ENCODE measurements at regions of chr7 and their contacts with region 1.

Region 1: DNA sequence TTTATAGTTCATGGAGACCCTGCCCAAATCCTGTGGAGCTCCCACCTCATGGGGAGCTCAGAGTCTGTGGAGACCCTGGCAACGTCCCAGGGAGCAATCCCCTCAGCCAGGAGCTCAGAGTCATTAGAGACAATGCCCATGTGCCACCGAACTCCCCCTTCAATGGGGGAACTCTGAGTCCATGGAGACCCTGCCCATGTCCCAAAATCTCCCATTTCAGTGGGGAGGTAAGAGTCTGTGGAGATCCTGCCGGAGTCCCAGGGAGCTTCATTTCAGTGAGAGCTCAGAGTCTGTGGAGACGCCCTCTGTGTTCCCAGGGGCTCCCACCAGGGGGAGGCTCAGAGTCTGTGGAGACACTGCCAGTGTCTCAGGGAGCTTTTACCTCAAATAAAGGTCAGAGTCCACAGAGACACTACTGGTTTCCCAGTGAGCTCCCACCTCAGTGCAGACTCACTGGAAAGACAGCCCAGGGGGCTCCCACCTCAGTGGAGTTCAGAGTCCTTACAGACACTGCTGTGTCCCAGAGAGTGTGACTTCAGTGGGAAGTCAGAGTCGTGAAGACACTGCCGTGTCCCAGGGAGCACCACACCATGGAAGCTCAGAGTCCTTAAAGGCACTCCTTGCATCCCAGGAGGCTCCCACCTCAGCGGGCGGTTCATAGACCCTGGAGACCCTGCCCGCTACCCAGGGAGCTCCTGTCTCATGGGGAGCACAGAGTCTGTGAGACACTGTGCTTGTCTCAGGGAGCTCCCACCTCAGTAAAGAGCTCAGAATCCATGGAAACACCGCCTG is 5.0 kb downstream of the MYO1G start:
- DNase-seq: peak in 2 of 3 donors; percentile 55 to 56
- ATAC-seq: peak; percentile 65 to 84 (median 79)
- H3K4me3 ChIP-seq: no peak overlapping the region
- H3K27ac ChIP-seq: no peak overlapping the region
- H3K4me1 ChIP-seq: no peaks in the 10 kb centered on the region
- H3K27me3 ChIP-seq: no peaks in the 10 kb centered on the region
- CTCF ChIP-seq: peak; percentile 41 to 52 (median 48)
- POLR2A ChIP-seq: no peak

Region 2: GRCh38 chr7:45136106-45137060 is 162.6 kb after region 1 on chr7:
- intact Hi-C with region 1: loop called (anchors 10 kb)
- DNase-seq: peak in 1 of 3 donors; percentile 64
- ATAC-seq: peak; percentile 77 to 92 (median 88)
- H3K4me3 ChIP-seq: no peak overlapping the region
- H3K27ac ChIP-seq: no peak overlapping the region
- H3K4me1 ChIP-seq: peaks cover 0 to 8% (median 0%) of the 10 kb centered on the region in 4 donors
- H3K27me3 ChIP-seq: no peaks in the 10 kb centered on the region
- CTCF ChIP-seq: peak; percentile 81 to 88 (median 82)
- POLR2A ChIP-seq: no peak

Measured in right lobe of liver (tissue), 6 donors.